ENCODE measurements at regions of chrX and their contacts with region 1.

Region 1: GRCh38 chrX:24838629-24839028 is 144.9 kb downstream of the POLA1 start:
- DNase-seq: no peak
- ATAC-seq: peak in 2 of 4 donors; percentile 50 to 56
- H3K4me3 ChIP-seq: no peak overlapping the region
- H3K27ac ChIP-seq: no peak overlapping the region
- H3K4me1 ChIP-seq: no peaks in the 10 kb centered on the region
- H3K27me3 ChIP-seq: no peaks in the 10 kb centered on the region
- CTCF ChIP-seq: peak in 3 of 4 donors; percentile 18 to 55 (median 40)

Region 2: DNA sequence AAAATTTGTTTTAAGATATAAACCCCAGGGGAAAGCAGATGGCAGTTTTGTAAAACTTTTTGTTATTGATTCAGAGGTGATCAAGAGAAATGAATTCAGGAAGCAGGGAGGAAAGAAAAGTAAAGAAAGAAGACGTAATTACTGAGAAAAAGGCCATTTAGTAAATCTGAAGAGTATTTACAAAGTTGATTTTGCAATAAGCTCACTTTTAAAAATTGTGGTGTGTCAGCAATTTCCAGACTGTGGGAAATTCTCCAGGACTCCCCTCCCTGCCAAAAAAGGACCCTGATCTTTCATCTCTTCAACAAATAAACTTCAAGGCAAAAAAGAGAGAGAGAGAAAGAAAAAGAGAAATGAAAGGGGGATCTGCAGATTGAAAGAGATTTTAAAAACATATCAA is 228.1 kb before region 1 on chrX:
- intact Hi-C with region 1: no loop called
- DNase-seq: no peak
- ATAC-seq: no peak
- H3K4me3 ChIP-seq: no peak overlapping the region
- H3K27ac ChIP-seq: no peak overlapping the region
- H3K4me1 ChIP-seq: no peaks in the 10 kb centered on the region
- H3K27me3 ChIP-seq: no peaks in the 10 kb centered on the region
- CTCF ChIP-seq: no peak

Region 3: DNA sequence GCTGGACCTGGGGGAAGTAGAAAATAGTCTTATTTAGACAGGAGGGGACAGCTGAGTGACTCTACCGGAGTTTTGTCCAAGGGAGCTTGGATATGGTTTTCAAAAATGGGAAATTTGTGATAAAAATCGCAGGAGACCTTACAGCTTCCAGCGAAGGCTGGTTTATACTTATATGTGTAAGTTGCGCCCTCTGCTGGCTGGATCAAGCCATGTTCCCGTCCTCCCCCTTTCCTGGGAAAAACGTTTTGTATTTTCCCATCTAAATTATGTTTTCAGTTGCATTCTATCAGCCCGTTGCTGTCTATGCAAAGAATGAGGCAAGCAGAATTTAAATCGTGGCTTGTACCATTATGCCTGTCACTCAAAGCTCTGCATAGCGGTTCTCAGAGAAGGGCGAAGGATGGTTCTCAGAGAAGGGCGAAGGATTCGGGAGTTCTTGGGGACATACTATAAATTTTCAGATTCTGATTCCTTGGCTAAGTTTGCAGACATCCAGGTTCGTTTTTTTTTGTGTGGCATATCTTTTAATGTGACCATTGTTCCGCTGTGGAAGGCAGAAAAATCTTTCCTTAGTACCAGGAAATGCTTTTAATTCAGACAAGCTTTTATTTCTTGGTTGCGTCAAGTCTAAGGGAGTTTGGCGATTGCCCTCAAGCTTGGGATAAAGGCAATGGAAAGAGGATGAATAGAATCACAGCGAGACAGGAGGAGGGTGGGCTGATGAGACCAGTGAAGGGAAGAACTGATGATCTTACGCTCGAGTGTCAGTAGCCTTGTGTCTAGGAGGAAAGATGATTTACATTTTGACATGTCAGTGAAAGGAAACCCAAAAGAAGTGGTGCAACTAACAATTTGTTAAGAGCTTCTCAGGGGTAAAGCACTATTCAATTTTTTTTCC is 305.7 kb after region 1 on chrX:
- intact Hi-C with region 1: loop called in 1 of 3 experiments (anchors 10 kb)
- DNase-seq: peak; percentile 7 to 84 (median 52)
- ATAC-seq: peak; percentile 67 to 82 (median 76)
- H3K4me3 ChIP-seq: no peak overlapping the region
- H3K27ac ChIP-seq: no peak overlapping the region
- H3K4me1 ChIP-seq: no peaks in the 10 kb centered on the region
- H3K27me3 ChIP-seq: peaks cover 0 to 15% (median 4%) of the 10 kb centered on the region in 4 donors
- CTCF ChIP-seq: peak; percentile 54 to 77 (median 70)

Region 4: GRCh38 chrX:25219480-25219879 is 380.9 kb after region 1 on chrX:
- intact Hi-C with region 1: no loop called
- DNase-seq: no peak
- ATAC-seq: no peak
- H3K4me3 ChIP-seq: no peak overlapping the region
- H3K27ac ChIP-seq: no peak overlapping the region
- H3K4me1 ChIP-seq: no peaks in the 10 kb centered on the region
- H3K27me3 ChIP-seq: peaks cover 0 to 9% (median 0%) of the 10 kb centered on the region in 4 donors
- CTCF ChIP-seq: no peak

Measured in pancreas (tissue), 10 donors.